Activated CD4-positive, alpha-beta memory T cell treated with anti-CD3 and anti-CD28 coated beads, Interleukin-2, amount 10 ng/mL, durations not matched to agents 7 days and 5 days (primary cell): ENCODE measurements at regions of chr11 and their contacts with region 1.

Region 1: GRCh38 chr11:128757235-128757711 is 63.4 kb downstream of the FLI1 start:
- DNase-seq: peak; percentile 77
- H3K4me3 Mint-ChIP-seq: peak overlapping the region; percentile 24
- H3K27ac Mint-ChIP-seq: peak overlapping the region; percentile 87
- H3K4me1 Mint-ChIP-seq: peaks cover 75% of the 10 kb centered on the region
- H3K27me3 Mint-ChIP-seq: no peaks in the 10 kb centered on the region

Region 2: DNA sequence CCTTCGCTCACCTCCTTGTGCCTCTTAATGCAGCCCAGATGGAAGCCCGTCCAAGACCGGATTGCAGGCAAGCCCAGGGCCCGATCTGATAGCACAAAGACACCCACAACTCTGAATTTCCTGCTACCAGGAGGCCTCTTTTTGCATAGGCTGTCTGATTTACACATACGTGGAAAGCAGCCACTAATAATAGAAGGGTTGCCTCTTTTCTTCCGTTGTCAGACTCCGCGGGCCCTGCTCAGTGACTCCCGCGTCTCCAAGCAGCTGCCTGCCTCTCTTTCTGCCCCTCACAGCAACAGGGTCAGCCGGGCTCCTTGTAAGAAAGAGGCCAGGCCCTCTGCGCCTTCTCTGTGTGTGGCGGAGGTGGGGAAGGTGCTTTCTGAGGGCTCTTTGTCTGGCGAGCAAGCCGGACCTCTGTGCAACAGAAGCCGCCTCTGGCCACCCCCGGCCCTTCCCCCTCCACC is 36.7 kb before region 1 on chr11:
- CTCF ChIA-PET with region 1: interaction called, 7 read pairs
- POLR2A ChIA-PET with region 1: interaction called, 17 read pairs
- DNase-seq: peak; percentile 57
- H3K4me3 Mint-ChIP-seq: peak overlapping the region; percentile 66
- H3K27ac Mint-ChIP-seq: peak overlapping the region; percentile 83
- H3K4me1 Mint-ChIP-seq: peaks cover 99% of the 10 kb centered on the region
- H3K27me3 Mint-ChIP-seq: no peaks in the 10 kb centered on the region

Region 3: GRCh38 chr11:128725630-128726319 is 31.5 kb before region 1 on chr11:
- CTCF ChIA-PET with region 1: interaction called, 6 read pairs
- POLR2A ChIA-PET with region 1: interaction called, 17 read pairs
- DNase-seq: peak; percentile 68
- H3K4me3 Mint-ChIP-seq: peak overlapping the region; percentile 67
- H3K27ac Mint-ChIP-seq: peak overlapping the region; percentile 95
- H3K4me1 Mint-ChIP-seq: peaks cover 98% of the 10 kb centered on the region
- H3K27me3 Mint-ChIP-seq: no peaks in the 10 kb centered on the region

Region 4: DNA sequence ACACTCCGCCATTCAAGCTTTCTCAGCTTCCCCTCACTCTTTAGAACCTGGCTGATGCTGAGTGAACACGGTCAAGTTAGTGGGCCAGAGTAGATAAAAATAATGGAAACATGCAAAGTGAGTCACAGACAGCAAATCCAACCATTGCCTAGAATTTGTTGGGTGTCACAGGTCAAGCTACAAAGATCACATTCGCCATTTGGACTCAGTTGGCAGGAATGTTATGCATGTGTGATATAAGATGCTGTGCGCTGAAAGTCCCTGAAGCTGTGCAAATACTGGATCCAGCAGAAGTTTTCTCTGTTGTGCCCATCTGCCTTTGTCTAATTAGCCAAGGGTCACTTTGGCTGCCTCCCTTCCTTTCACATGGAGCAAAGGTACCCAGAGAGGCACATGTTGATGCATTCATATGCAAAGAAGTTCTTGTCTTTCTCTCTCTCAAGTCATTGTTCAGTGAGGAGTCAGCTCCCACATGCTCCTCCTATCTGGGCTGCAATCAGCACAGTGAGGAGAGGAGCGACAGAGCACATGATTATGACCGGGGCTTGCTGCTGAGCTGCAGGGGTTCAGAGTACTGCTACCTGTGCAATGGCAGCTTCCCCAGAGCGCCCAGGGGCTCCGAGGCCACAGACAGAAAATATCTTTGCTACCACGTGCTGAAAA is 23.7 kb before region 1 on chr11:
- CTCF ChIA-PET with region 1: interaction called, 14 read pairs
- POLR2A ChIA-PET with region 1: interaction called, 7 read pairs
- DNase-seq: peak; percentile 62
- H3K4me3 Mint-ChIP-seq: peak overlapping the region; percentile 55
- H3K27ac Mint-ChIP-seq: peak overlapping the region; percentile 95
- H3K4me1 Mint-ChIP-seq: peaks cover 99% of the 10 kb centered on the region
- H3K27me3 Mint-ChIP-seq: no peaks in the 10 kb centered on the region

Region 5: DNA sequence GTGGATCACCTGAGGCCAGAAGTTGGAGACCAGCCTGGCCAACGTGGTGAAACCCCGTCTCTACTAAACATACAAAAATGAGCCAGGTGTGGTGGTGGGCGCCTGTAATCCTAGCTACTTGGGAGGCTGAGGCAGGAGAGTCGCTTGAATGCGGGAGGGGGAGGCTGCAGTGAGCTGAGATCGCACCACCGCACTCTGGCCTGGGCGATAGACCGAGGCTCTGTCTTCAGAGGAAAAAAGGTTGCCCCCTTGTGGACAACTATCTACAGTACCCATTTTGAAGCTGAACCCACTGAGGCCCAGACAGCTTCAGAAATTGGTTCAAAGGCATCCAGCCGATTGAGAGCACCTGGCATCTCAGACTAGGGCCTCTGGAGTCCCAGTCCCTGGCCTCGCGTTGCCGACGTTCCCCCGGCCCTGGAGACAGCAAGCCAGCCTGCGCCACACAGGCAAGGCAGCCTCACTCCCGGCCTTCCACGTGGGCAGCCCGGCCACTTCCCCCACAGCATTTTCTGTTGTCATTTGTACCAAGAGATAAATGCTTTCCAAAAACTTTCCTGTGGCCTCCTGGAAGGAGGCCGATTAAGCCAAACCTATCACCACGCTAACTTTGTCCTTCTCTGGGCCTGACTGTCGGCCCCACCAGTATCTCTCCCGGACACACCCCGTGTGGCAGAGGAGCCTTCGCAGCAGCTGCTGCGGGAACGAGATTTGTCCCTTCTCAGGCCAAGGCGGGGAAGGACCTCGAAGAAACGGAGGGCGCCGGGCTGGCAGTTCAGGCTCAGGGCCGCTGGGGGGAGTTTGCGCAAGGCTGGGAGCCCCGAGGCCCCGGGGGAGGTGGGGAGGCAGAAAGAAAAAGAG is 19.4 kb after region 1 on chr11:
- CTCF ChIA-PET with region 1: interaction called, 11 read pairs
- POLR2A ChIA-PET with region 1: interaction called, 4 read pairs
- DNase-seq: peak; percentile 32
- H3K4me3 Mint-ChIP-seq: no peak overlapping the region
- H3K27ac Mint-ChIP-seq: peak overlapping the region; percentile 30
- H3K4me1 Mint-ChIP-seq: peaks cover 54% of the 10 kb centered on the region
- H3K27me3 Mint-ChIP-seq: no peaks in the 10 kb centered on the region

Region 6: GRCh38 chr11:129067454-129067853 is 310.2 kb after region 1 on chr11:
- CTCF ChIA-PET with region 1: no interaction called
- POLR2A ChIA-PET with region 1: no interaction called
- DNase-seq: no peak
- H3K4me3 Mint-ChIP-seq: no peak overlapping the region
- H3K27ac Mint-ChIP-seq: no peak overlapping the region
- H3K4me1 Mint-ChIP-seq: no peaks in the 10 kb centered on the region
- H3K27me3 Mint-ChIP-seq: no peaks in the 10 kb centered on the region